ENCODE measurements at regions of chr6 and their contacts with region 1.

Region 1: DNA sequence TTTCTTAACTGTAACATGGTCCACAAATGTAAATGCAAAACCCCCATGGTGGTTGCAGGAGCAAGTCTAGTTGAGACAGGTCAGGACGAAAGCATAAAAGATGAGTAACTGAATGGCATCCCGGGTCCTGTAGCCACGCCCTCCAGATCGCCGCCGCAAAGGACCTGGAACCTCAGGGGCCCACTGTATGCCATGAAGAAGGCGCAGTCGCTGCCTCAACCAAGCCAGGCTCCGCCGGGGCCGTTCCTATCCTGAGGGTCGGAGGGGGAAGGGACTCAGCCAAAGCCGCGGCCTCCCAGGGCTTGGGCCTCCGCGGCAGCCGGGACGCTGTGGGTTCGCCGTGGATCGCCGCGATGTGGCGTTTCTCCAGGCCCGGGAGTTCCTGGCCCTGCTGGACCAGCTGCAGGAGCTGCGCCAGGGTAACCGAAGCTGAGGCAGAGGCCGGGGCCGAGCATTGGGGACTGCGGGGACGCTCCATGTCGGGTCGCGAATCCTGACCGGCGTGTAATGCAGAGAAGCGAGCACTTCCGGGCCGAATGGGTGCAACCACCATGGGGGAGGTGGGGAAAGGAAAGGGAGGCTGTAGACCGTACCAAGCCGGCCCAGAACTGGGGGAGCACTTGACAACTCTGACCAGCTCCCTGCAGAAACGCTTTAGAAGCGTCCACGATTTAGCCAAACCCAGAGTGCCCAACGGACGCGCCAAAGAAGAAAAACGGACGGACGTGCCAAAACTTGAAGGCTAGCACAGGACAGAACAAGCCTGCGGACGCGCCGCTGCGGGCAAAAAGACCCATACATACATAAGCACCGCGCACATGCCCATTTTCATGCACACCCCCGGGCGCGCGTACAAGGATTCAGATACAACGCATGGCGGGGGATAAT is 11.1 kb downstream of the RPL7L1 start:
- DNase-seq: peak; percentile 98
- H3K4me3 ChIP-seq: peak overlapping the region; percentile 70 to 84 (median 78)
- H3K27ac ChIP-seq: peak overlapping the region; percentile 91
- H3K4me1 ChIP-seq: peaks cover 7% of the 10 kb centered on the region
- H3K27me3 ChIP-seq: no peaks in the 10 kb centered on the region
- CTCF ChIP-seq: no peak

Region 2: DNA sequence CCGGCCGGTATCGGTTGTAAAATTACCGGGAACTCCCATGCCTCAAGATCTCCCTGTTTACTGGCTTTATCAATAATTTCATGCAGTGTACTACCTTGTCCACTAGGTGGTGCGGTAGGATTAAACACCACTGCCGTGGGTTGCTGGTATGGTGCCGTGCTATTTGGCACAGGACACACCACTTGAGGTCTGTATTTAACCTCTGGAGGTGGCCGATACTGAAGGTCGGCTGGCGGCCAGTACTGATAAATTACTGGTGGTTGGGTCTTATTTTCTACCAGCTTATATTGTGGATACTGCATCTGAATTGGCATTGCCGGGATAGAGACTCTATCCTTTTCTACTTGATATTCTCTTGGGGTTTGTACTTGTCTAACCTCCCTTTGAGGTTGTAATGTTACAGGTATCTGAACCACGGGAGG is 11.0 kb after region 1 on chr6:
- CTCF ChIA-PET with region 1: no interaction called
- dilution Hi-C with region 1: no loop called
- in situ Hi-C with region 1: no loop called
- intact Hi-C with region 1: no loop called
- DNase-seq: peak; percentile 85
- H3K4me3 ChIP-seq: peak overlapping the region; percentile 8 to 16 (median 12)
- H3K27ac ChIP-seq: peak overlapping the region; percentile 9
- H3K4me1 ChIP-seq: peaks cover 8% of the 10 kb centered on the region
- H3K27me3 ChIP-seq: no peaks in the 10 kb centered on the region
- CTCF ChIP-seq: peak; percentile 74

Region 3: GRCh38 chr6:43159599-43159998 is 269.0 kb after region 1 on chr6:
- CTCF ChIA-PET with region 1: no interaction called
- dilution Hi-C with region 1: no loop called
- in situ Hi-C with region 1: no loop called
- intact Hi-C with region 1: no loop called
- DNase-seq: no peak
- H3K4me3 ChIP-seq: no peak overlapping the region
- H3K27ac ChIP-seq: no peak overlapping the region
- H3K4me1 ChIP-seq: no peaks in the 10 kb centered on the region
- H3K27me3 ChIP-seq: no peaks in the 10 kb centered on the region
- CTCF ChIP-seq: no peak

Region 4: GRCh38 chr6:43786664-43787329 is 896.2 kb after region 1 on chr6:
- CTCF ChIA-PET with region 1: interaction called, 21 read pairs
- dilution Hi-C with region 1: no loop called
- in situ Hi-C with region 1: no loop called
- intact Hi-C with region 1: no loop called
- DNase-seq: no peak
- H3K4me3 ChIP-seq: no peak overlapping the region
- H3K27ac ChIP-seq: no peak overlapping the region
- H3K4me1 ChIP-seq: no peaks in the 10 kb centered on the region
- H3K27me3 ChIP-seq: no peaks in the 10 kb centered on the region
- CTCF ChIP-seq: no peak

Measured in mammary epithelial cell (primary cell).